ENCODE measurements at regions of chr7 and their contacts with region 1.

Region 1: GRCh38 chr7:100428967-100429636 is 529 bp upstream of the MEPCE start:
- DNase-seq: peak; percentile 100
- ATAC-seq: peak; percentile 59
- H3K4me3 ChIP-seq: peak overlapping the region; percentile 73 to 91 (median 85)
- H3K4me3 Mint-ChIP-seq: peak overlapping the region; percentile 97
- H3K27ac ChIP-seq: peak overlapping the region; percentile 99 to 100
- H3K27ac Mint-ChIP-seq: peak overlapping the region; percentile 100
- H3K4me1 ChIP-seq: peaks cover 24 to 35% of the 10 kb centered on the region in 2 donors
- H3K4me1 Mint-ChIP-seq: peaks cover 41% of the 10 kb centered on the region
- H3K27me3 ChIP-seq: no peaks in the 10 kb centered on the region
- H3K27me3 Mint-ChIP-seq: no peaks in the 10 kb centered on the region
- CTCF ChIP-seq: no peak

Region 2: DNA sequence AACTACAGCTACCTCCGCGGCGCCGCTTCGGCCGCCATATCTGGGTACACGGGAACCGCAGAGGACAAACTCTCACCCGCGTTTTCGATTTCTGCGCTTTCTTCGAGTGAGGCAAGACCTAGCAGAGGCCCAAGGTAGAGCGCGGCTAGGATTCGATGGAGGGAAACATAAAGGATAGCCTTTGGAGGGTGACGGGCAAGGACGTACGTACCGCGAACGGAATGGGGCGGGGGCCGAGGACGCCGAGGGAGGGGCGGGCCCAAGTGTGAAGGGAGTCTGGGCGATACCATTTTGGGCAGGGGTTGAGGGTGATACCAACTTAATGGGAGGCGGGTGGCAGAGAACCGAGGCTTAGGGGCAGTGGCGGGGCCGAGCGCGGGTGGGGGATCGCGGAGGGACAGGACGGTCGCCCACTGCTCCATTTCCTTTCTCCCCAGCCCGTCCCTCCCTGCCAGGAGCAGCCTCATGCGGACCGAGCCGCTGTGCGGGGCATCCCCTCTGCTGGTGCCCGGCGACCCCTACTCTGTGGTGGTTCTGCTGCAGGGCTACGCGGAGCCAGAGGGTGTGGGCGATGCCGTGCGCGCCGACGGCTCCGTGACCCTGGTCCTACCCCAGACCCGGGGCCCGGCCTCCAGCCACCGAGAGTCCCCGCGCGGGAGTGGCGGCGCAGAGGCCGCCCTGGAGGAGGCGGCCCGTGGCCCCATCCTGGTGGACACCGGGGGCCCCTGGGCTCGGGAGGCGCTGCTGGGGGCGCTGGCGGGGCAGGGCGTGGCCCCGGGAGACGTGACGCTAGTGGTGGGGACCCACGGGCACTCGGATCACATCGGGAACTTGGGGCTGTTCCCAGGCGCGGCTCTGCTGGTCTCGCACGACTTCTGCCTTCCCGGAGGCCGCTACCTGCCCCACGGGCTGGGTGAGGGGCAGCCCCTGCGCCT is 301.9 kb before region 1 on chr7 and contains the start of gene MBLAC1:
- CTCF ChIA-PET with region 1: interaction called, 4 read pairs
- POLR2A ChIA-PET with region 1: interaction called, 4 read pairs
- intact Hi-C with region 1: loop called (anchors 1 kb)
- DNase-seq: peak; percentile 97
- ATAC-seq: peak; percentile 83
- H3K4me3 ChIP-seq: peak within 1 kb of the TSS; percentile 54 to 84 (median 78)
- H3K4me3 Mint-ChIP-seq: peak within 1 kb of the TSS; percentile 100
- H3K27ac ChIP-seq: peak within 1 kb of the TSS; percentile 83 to 95
- H3K27ac Mint-ChIP-seq: peak within 1 kb of the TSS; percentile 100
- H3K4me1 ChIP-seq: peaks cover 20 to 36% of the 10 kb centered on the region in 2 donors
- H3K4me1 Mint-ChIP-seq: peaks cover 31% of the 10 kb centered on the region
- H3K27me3 ChIP-seq: no peaks in the 10 kb centered on the region
- H3K27me3 Mint-ChIP-seq: no peaks in the 10 kb centered on the region
- CTCF ChIP-seq: no peak
- total RNA-seq, gene MBLAC1: 4.5 TPM in 2 replicates

Region 3: DNA sequence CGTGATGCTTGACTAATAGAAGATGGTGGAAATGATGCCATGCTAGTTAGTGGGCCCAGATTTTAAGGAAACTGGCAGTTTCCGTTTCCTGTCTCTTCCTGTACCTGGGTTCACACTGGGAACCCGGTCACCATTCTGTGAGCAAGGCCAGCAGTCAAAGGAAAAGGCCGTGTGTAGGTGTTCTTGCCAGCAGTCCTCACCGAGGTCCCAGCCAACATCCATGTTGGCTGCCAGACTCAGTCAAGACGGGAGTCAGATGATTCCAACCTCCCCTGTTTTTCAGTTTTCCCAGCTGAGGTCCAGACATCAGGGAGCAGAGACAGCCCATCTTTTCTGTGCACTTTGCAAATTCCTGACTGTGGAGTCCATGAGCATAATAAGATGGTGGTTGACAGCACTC is 86.3 kb before region 1 on chr7:
- CTCF ChIA-PET with region 1: no interaction called
- POLR2A ChIA-PET with region 1: interaction called, 5 read pairs
- intact Hi-C with region 1: loop called (anchors 2 kb)
- DNase-seq: peak; percentile 9
- ATAC-seq: no peak
- H3K4me3 ChIP-seq: no peak overlapping the region
- H3K4me3 Mint-ChIP-seq: peak overlapping the region; percentile 41
- H3K27ac ChIP-seq: peak overlapping the region in 1 of 2 donors; percentile 63
- H3K27ac Mint-ChIP-seq: peak overlapping the region; percentile 87
- H3K4me1 ChIP-seq: peaks cover 18 to 29% of the 10 kb centered on the region in 2 donors
- H3K4me1 Mint-ChIP-seq: peaks cover 45% of the 10 kb centered on the region
- H3K27me3 ChIP-seq: no peaks in the 10 kb centered on the region
- H3K27me3 Mint-ChIP-seq: no peaks in the 10 kb centered on the region
- CTCF ChIP-seq: no peak

Region 4: DNA sequence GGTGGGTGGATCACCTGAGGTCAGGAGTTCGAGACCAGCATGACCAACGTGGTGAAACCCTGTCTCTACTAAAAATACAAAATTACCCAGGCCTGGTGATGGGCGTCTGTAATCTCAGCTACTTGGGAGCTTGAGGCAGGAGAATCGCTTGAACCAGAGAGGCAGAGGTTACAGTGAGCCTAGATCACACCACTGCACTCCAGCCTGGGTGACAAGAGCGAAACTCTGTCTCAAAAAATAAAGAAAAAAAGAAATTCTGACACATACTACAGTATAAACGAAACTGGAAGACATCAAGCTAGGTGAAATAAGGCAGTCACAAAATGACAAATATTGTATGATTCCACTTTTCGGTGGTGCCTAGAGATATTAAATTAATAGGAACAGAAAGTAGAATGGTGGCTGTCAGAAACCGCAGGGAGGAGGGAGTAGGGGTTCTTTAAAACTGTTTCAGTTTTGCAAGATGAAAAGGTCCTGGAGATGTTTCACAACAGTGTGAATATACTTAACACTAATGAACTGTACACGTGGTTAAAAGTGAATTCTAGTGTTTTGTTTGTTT is 32.6 kb before region 1 on chr7:
- CTCF ChIA-PET with region 1: interaction called, 4 read pairs
- POLR2A ChIA-PET with region 1: interaction called, 6 read pairs
- intact Hi-C with region 1: loop called (anchors 2 kb)
- DNase-seq: peak; percentile 86
- ATAC-seq: peak; percentile 90
- H3K4me3 ChIP-seq: peak overlapping the region in 3 of 5 experiments; percentile 1 to 37 (median 8)
- H3K4me3 Mint-ChIP-seq: peak overlapping the region; percentile 74
- H3K27ac ChIP-seq: peak overlapping the region; percentile 67 to 82
- H3K27ac Mint-ChIP-seq: peak overlapping the region; percentile 93
- H3K4me1 ChIP-seq: peaks cover 30 to 41% of the 10 kb centered on the region in 2 donors
- H3K4me1 Mint-ChIP-seq: peaks cover 49% of the 10 kb centered on the region
- H3K27me3 ChIP-seq: no peaks in the 10 kb centered on the region
- H3K27me3 Mint-ChIP-seq: no peaks in the 10 kb centered on the region
- CTCF ChIP-seq: no peak

Region 5: DNA sequence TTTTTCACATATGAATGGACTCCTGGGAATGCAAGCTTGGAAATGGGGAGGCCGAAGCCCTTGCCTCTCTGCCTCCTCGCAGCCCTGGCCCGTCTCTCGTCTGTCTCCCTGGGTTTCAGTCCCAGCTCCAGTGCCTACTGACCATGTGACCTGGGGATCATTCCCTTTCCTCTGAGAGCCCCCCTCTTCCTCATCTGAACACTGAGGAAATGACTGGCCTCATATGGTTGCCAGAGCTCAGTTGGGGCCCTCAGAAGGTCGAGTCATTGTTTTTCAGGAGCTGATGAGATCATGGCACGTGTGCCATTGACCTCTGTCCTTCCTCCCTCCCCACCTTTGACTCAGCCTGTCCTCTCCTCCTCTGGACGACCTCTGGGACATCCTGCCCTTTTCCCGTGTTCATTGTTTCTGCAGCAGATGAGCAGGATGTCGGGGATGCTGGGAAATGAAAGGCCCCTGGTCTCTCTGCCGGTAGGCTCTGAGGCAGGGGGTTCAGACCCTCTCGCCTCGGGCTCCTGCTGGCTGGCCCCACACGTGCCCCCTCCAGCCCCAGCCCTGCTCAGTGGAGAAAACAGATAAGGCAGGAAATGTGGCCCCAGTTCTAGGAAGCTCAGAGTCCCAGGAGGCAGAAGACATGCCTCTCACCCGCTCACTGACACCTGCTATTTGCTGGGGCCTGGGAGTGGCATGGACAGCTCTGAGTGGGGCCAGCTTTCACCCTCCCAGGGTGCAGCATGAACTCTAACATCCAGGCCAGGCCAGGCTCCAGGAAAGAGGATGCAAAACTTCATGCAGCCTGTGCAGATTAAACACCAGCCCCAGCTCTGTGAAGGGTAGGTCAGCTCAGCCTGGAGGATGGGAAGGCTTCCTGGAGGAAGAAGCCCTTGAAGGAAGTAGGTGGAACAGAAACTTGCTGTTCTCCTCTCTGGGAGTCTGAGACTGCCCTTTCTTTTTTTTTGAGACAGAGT is 15.5 kb after region 1 on chr7:
- CTCF ChIA-PET with region 1: interaction called, 8 read pairs
- POLR2A ChIA-PET with region 1: interaction called, 13 read pairs
- intact Hi-C with region 1: no loop called
- DNase-seq: no peak
- ATAC-seq: peak; percentile 47
- H3K4me3 ChIP-seq: no peak overlapping the region
- H3K4me3 Mint-ChIP-seq: no peak overlapping the region
- H3K27ac ChIP-seq: peak overlapping the region; percentile 30 to 51
- H3K27ac Mint-ChIP-seq: peak overlapping the region; percentile 77
- H3K4me1 ChIP-seq: peaks cover 15 to 22% of the 10 kb centered on the region in 2 donors
- H3K4me1 Mint-ChIP-seq: peaks cover 15% of the 10 kb centered on the region
- H3K27me3 ChIP-seq: no peaks in the 10 kb centered on the region
- H3K27me3 Mint-ChIP-seq: no peaks in the 10 kb centered on the region
- CTCF ChIP-seq: no peak

Region 6: GRCh38 chr7:100469227-100470044 is 40.3 kb after region 1 on chr7:
- CTCF ChIA-PET with region 1: no interaction called
- POLR2A ChIA-PET with region 1: no interaction called
- intact Hi-C with region 1: no loop called
- DNase-seq: peak; percentile 84
- ATAC-seq: peak; percentile 90
- H3K4me3 ChIP-seq: no peak overlapping the region
- H3K4me3 Mint-ChIP-seq: no peak overlapping the region
- H3K27ac ChIP-seq: no peak overlapping the region
- H3K27ac Mint-ChIP-seq: peak overlapping the region; percentile 53
- H3K4me1 ChIP-seq: peaks cover 9 to 21% of the 10 kb centered on the region in 2 donors
- H3K4me1 Mint-ChIP-seq: peaks cover 24% of the 10 kb centered on the region
- H3K27me3 ChIP-seq: no peaks in the 10 kb centered on the region
- H3K27me3 Mint-ChIP-seq: no peaks in the 10 kb centered on the region
- CTCF ChIP-seq: peak; percentile 87

Region 7: DNA sequence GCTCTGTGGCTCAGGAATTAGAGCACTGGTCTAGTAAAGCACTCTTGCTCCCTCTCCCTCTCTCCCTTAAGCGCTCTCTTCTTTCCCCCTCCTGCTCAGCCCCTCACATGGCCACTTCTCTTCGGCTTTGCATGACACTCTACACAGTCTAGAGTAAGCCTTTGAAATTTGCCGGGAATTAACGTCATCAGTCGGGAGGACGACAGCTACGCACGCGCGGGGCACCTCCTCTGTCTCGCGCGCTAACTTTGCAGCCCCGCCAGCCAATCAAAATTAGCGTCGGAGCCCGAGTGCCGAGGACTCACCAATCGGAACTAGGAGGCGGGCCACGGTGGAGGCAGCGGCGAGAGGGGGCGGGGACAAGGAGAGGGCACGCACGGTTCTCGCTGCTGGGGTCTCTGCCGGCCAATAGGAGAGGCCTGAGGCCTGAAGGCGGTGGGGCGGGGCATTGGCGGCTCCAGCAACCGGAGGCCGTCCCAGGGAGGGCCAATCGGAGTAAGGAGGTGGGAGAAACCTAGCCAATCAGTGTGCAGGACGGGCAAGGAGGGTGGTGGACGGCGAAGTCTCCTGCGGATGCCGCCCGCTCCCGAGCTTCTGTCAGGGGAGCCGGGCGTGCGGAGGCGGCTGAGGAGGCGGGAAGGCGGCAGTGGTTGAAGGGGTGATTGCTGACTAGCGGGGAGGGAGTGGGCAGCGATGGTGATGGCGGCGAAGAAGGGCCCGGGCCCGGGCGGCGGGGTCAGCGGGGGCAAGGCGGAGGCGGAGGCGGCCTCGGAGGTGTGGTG is 109.7 kb after region 1 on chr7 and contains the start of gene AGFG2:
- CTCF ChIA-PET with region 1: no interaction called
- POLR2A ChIA-PET with region 1: interaction called, 3 read pairs
- intact Hi-C with region 1: loop called (anchors 2 kb)
- DNase-seq: peak; percentile 100
- ATAC-seq: peak; percentile 97
- H3K4me3 ChIP-seq: peak within 1 kb of the TSS; percentile 62 to 84 (median 72)
- H3K4me3 Mint-ChIP-seq: peak within 1 kb of the TSS; percentile 91
- H3K27ac ChIP-seq: peak within 1 kb of the TSS in 1 of 2 donors; percentile 42
- H3K27ac Mint-ChIP-seq: peak within 1 kb of the TSS; percentile 76
- H3K4me1 ChIP-seq: peaks cover 14 to 23% of the 10 kb centered on the region in 2 donors
- H3K4me1 Mint-ChIP-seq: peaks cover 36% of the 10 kb centered on the region
- H3K27me3 ChIP-seq: no peaks in the 10 kb centered on the region
- H3K27me3 Mint-ChIP-seq: no peaks in the 10 kb centered on the region
- CTCF ChIP-seq: no peak
- total RNA-seq, gene AGFG2: 11.0 and 11.6 TPM in 2 replicates

Region 8: DNA sequence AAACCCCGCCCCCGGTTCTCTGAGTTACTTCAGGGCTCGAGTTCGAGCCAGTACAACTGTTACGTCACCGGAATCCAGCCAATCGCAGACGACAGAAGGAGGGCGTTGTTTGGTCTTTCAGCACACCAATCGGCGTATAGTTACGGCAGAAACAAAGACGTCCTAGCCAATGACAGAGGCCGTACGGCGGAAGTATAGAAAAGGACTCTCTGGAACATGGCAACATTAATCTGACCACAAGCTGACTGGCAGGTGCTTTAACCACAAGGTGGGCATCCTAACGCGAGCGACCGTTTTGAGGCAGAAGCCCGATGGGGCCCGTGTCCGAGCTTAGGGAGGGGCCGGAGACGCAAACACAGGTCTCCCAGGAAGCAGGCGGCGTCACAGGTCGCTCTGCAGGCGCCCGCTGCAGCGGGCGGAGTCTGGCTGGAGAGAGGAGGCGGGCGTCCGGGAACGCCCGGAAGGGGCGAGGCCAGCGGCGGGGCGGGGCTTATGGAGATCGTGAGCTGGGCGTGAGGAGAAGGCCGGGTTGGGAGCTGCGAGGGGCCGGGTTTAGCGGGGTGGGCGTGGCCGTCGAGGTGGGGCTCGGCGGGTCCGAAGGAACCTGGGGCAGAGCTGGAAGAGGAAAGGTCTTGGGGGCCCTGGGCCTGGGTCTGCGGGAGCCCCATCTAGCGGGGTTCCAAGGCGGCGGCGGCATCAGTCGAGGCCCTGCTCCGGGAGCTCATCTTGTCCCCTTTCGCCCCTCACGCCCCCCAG is 183.1 kb after region 1 on chr7 and contains the start of gene MOSPD3:
- CTCF ChIA-PET with region 1: no interaction called
- POLR2A ChIA-PET with region 1: interaction called, 9 read pairs
- intact Hi-C with region 1: loop called (anchors 2 kb)
- DNase-seq: peak; percentile 99
- ATAC-seq: peak; percentile 91
- H3K4me3 ChIP-seq: peak within 1 kb of the TSS; percentile 53 to 93 (median 84)
- H3K4me3 Mint-ChIP-seq: peak within 1 kb of the TSS; percentile 93
- H3K27ac ChIP-seq: peak within 1 kb of the TSS; percentile 82
- H3K27ac Mint-ChIP-seq: peak within 1 kb of the TSS; percentile 99
- H3K4me1 ChIP-seq: peaks cover 13 to 19% of the 10 kb centered on the region in 2 donors
- H3K4me1 Mint-ChIP-seq: peaks cover 18% of the 10 kb centered on the region
- H3K27me3 ChIP-seq: no peaks in the 10 kb centered on the region
- H3K27me3 Mint-ChIP-seq: no peaks in the 10 kb centered on the region
- CTCF ChIP-seq: no peak
- total RNA-seq, gene MOSPD3: 17.3 and 18.8 TPM in 2 replicates

Measured in B cell (primary cell).